ENCODE measurements at regions of chr11 and their contacts with region 1.

Region 1: DNA sequence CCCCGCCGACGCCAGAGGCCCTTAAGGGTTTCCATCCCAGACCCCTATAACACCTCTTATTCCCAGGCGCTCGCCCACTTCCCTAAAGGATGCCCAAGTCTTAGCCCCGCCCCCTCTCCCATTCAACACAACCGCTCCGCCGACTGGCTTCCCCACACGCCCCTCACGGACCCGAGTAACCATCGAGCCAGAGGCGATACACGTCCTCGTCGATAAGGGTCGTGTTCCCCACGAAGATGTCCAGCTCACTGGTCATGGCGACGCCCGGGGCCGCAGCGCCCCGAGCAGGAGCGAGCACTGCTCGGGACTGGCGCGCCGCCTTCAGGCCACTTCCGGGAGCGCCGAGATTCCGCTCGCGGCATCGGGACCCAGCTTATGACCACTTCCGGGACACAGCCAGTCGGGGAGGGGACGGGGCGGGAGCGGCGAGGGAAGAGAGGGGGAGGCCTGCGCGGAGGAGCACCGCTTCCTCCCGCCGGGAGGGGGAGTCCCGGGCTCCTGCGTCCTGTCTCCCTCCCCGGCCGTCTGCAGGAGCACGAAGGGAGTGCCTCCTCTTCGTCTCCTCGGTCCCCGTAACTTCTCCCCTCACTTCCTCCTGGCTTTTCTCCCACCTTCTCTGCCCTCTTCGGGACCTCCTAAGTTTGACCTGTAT is at the start of gene FIBP:
- DNase-seq: peak; percentile 97
- H3K4me3 Mint-ChIP-seq: peak within 1 kb of the TSS; percentile 90
- H3K27ac Mint-ChIP-seq: peak within 1 kb of the TSS; percentile 90
- H3K4me1 Mint-ChIP-seq: peaks cover 28% of the 10 kb centered on the region
- H3K27me3 Mint-ChIP-seq: no peaks in the 10 kb centered on the region
- CTCF ChIP-seq: peak; percentile 84
- total RNA-seq, gene FIBP: 79.8 and 80.8 TPM in 2 replicates

Region 2: DNA sequence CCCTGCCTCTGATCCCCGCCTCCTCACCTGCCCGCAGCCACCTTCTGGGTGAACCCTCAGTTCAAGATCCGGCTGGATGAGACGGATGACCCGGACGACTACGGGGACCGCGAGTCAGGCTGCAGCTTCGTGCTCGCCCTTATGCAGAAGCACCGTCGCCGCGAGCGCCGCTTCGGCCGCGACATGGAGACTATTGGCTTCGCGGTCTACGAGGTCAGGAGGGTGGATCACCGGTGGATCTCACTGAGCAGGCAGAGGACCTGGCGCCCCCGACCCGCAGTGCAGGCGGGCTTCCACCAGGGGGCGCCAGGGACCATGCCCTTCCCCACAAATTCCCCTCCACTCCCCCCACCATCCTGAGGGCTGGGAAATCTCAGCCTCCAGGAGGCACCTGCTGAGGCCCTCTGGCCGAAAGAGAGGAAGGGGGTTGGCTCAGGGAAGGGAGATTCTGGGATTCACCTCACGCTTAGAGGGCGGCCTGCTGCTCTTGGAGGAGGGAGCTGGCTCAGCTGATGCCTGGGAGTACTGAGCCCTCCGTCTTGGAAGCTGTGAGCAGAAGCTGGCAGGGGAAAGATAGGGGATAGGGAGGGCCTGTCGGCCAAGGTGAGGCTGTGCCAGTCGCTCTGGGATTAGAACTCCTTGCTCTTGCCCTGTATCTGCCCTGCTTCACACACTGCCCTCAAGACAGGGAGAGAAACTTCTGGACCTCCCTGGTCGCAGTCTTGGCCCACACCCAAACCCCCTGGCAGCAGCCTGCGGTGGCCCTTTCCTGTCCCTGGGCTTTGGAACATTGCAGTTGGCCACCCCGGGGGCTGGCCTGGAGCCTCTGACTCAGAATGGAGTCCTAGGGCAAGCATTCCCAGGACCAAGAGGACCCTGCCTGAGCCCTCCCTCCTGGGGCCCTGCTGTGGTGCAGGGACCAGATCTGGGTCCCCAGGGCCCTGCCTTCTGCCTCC is 683.4 kb before region 1 on chr11:
- CTCF ChIA-PET with region 1: no interaction called
- POLR2A ChIA-PET with region 1: no interaction called
- intact Hi-C with region 1: no loop called
- DNase-seq: peak; percentile 43
- H3K4me3 Mint-ChIP-seq: no peak overlapping the region
- H3K27ac Mint-ChIP-seq: no peak overlapping the region
- H3K4me1 Mint-ChIP-seq: no peaks in the 10 kb centered on the region
- H3K27me3 Mint-ChIP-seq: no peaks in the 10 kb centered on the region
- CTCF ChIP-seq: peak; percentile 97

Region 3: GRCh38 chr11:65695456-65696241 is 192.6 kb before region 1 on chr11:
- CTCF ChIA-PET with region 1: no interaction called
- POLR2A ChIA-PET with region 1: no interaction called
- intact Hi-C with region 1: no loop called
- DNase-seq: peak; percentile 61
- H3K4me3 Mint-ChIP-seq: no peak overlapping the region
- H3K27ac Mint-ChIP-seq: no peak overlapping the region
- H3K4me1 Mint-ChIP-seq: no peaks in the 10 kb centered on the region
- H3K27me3 Mint-ChIP-seq: peaks cover 30% of the 10 kb centered on the region
- CTCF ChIP-seq: no peak

Region 4: GRCh38 chr11:65711785-65712632 is 176.3 kb before region 1 on chr11 and contains the start of gene KAT5:
- CTCF ChIA-PET with region 1: interaction called, 17 read pairs
- POLR2A ChIA-PET with region 1: interaction called, 18 read pairs
- intact Hi-C with region 1: loop called (anchors 1 kb)
- DNase-seq: peak; percentile 98
- H3K4me3 Mint-ChIP-seq: peak within 1 kb of the TSS; percentile 80
- H3K27ac Mint-ChIP-seq: peak within 1 kb of the TSS; percentile 99
- H3K4me1 Mint-ChIP-seq: no peaks in the 10 kb centered on the region
- H3K27me3 Mint-ChIP-seq: no peaks in the 10 kb centered on the region
- CTCF ChIP-seq: peak; percentile 95
- total RNA-seq, gene KAT5: 37.6 and 48.1 TPM in 2 replicates

Region 5: DNA sequence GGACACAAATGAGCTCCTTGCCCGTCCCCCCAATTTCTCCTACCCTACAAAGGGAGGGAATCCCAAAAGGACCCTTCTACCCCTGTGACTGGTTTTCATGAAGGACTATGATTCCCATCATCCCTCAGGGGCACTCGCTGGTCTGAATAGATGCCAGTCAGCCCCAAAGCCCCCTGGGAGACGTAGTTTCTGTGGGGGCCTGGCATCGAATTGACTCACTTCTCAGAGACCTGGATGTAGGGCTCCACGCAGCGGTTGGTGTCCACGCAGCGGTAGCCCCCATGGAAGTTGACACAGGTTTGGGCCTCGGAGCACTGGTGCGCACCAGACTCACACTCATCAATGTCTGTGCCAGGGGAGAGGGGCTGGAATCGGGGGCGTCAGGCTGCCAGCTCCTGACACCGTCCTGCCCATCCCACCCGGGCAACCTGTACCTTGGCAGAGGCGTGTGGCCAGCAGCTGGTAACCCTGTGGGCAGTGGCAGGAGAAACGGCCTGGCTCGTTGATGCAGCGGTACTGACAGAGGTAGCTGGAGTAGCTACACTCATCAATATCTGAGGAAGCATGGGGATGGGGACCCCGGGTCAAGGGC is 20.1 kb before region 1 on chr11:
- CTCF ChIA-PET with region 1: interaction called, 20 read pairs
- POLR2A ChIA-PET with region 1: interaction called, 26 read pairs
- intact Hi-C with region 1: no loop called
- DNase-seq: no peak
- H3K4me3 Mint-ChIP-seq: no peak overlapping the region
- H3K27ac Mint-ChIP-seq: no peak overlapping the region
- H3K4me1 Mint-ChIP-seq: peaks cover 4% of the 10 kb centered on the region
- H3K27me3 Mint-ChIP-seq: no peaks in the 10 kb centered on the region
- CTCF ChIP-seq: no peak

Region 6: GRCh38 chr11:65911682-65912568 is 23.6 kb after region 1 on chr11:
- CTCF ChIA-PET with region 1: interaction called, 15 read pairs
- POLR2A ChIA-PET with region 1: interaction called, 96 read pairs
- intact Hi-C with region 1: loop called (anchors 1 kb)
- DNase-seq: peak; percentile 90
- H3K4me3 Mint-ChIP-seq: no peak overlapping the region
- H3K27ac Mint-ChIP-seq: no peak overlapping the region
- H3K4me1 Mint-ChIP-seq: peaks cover 33% of the 10 kb centered on the region
- H3K27me3 Mint-ChIP-seq: no peaks in the 10 kb centered on the region
- CTCF ChIP-seq: peak; percentile 27

Region 7: DNA sequence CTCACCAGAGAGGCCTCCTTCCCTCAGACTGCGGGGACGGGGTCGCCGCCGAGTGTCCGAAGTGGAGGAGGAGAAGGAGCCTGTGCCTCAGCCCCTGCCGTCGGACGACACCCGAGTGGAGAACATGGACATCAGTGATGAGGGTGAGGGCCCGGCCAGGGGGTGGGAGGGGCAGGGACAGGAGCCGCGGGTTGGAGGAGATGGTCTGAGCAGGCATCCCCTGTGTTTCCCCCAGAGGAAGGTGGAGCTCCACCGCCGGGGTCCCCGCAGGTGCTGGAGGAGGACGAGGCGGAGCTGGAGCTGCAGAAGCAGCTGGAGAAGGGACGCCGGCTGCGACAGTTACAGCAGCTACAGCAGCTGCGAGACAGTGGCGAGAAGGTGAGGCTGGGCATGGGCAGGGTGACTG is 79.2 kb after region 1 on chr11:
- CTCF ChIA-PET with region 1: interaction called, 27 read pairs
- POLR2A ChIA-PET with region 1: interaction called, 28 read pairs
- intact Hi-C with region 1: no loop called
- DNase-seq: no peak
- H3K4me3 Mint-ChIP-seq: no peak overlapping the region
- H3K27ac Mint-ChIP-seq: no peak overlapping the region
- H3K4me1 Mint-ChIP-seq: peaks cover 29% of the 10 kb centered on the region
- H3K27me3 Mint-ChIP-seq: no peaks in the 10 kb centered on the region
- CTCF ChIP-seq: no peak

Region 8: GRCh38 chr11:66001942-66002647 is 113.8 kb after region 1 on chr11 and contains the starts of genes BANF1 and EIF1AD:
- CTCF ChIA-PET with region 1: interaction called, 4 read pairs
- POLR2A ChIA-PET with region 1: interaction called, 30 read pairs
- intact Hi-C with region 1: no loop called
- DNase-seq: peak; percentile 99
- H3K4me3 Mint-ChIP-seq: peak within 1 kb of the TSS; percentile 97
- H3K27ac Mint-ChIP-seq: peak within 1 kb of the TSS; percentile 96
- H3K4me1 Mint-ChIP-seq: no peaks in the 10 kb centered on the region
- H3K27me3 Mint-ChIP-seq: no peaks in the 10 kb centered on the region
- CTCF ChIP-seq: no peak
- total RNA-seq, gene BANF1: 154 and 198 TPM in 2 replicates
- total RNA-seq, gene EIF1AD: 21.7 and 33.5 TPM in 2 replicates

Region 9: GRCh38 chr11:66251809-66252208 is 363.5 kb after region 1 on chr11:
- CTCF ChIA-PET with region 1: no interaction called
- POLR2A ChIA-PET with region 1: no interaction called
- intact Hi-C with region 1: no loop called
- DNase-seq: no peak
- H3K4me3 Mint-ChIP-seq: no peak overlapping the region
- H3K27ac Mint-ChIP-seq: no peak overlapping the region
- H3K4me1 Mint-ChIP-seq: peaks cover 3% of the 10 kb centered on the region
- H3K27me3 Mint-ChIP-seq: no peaks in the 10 kb centered on the region
- CTCF ChIP-seq: no peak